Activated CD4-positive, alpha-beta memory T cell treated with anti-CD3 and anti-CD28 coated beads for 36 hours (primary cell): ENCODE measurements at regions of chr6 and their contacts with region 1.

Region 1: DNA sequence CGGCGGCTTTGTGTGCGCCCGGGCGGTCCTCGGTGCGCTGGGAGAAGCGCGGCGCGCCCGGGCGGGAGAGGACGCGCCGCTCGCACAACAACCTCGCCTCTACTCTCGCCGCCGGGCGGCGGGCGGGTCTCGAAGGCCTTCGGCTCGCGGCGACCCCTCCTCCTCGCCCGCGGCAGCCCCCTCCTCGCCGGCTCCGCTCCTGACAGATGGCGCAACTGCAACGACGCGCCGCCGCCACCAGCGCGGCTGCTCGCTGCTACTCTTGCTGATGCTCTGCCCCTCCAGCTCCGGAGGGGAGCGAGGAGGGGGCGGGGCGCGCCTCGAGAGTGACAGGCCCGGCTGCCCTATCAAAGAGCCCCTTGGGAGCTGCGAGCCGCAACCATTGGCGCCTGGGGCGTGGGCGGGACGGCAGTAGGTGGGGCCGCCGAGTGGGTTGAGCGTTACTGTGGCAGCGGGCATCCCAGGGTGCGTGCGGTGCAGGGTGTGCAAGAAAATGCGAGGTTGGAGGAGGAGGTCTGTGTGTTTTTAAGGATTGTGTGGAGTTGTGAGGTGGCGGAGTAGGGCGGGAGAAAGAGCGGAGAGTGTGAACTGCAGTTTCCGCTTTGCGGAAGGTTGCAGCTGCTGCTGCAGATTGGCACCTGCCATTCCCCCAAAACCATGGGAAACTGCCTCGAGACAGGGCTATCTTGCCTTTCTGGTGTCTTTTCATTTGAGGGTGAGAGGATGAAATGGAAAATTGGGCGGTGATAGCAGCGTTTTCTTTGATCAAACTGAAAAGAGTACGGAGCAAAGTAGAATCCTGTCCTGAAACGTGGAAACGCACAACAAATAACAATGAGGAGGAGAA is at the start of gene FYN:
- DNase-seq: peak; percentile 99
- H3K4me3 Mint-ChIP-seq: peak within 1 kb of the TSS; percentile 98
- H3K27ac Mint-ChIP-seq: peak within 1 kb of the TSS; percentile 96
- H3K4me1 Mint-ChIP-seq: peaks cover 30% of the 10 kb centered on the region
- H3K27me3 Mint-ChIP-seq: no peaks in the 10 kb centered on the region
- total RNA-seq, gene FYN: 353 to 365 TPM

Region 2: DNA sequence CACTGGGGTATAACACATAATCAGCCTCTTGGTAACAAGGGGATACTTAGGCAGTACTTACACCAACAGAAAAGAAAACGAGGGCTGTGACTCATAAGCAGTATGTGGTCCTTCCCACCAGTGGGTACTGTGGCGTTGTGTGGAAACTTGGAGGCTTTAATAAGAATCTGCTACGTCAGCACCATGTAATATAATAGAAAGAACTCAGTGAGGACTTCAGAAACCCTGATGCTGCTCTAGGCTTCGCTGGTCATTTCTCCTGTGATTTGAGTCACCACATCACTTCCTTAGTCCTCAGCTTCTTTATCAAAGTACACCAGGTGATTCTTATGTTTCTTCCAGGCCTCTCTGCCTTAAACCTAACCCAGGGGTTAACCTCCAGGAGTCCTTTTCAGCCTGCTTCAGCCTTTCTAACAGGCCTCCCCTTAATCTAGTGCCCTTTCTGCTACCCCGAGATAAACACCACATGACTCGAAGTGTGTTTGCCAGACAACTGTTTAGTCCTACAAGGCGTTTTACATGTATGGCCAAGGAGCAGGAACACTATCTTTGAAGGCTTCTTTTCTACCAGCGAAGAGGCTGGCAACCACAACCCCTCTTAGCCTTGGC is 68.7 kb before region 1 on chr6:
- CTCF ChIA-PET with region 1: interaction called, 4 read pairs
- POLR2A ChIA-PET with region 1: interaction called, 8 read pairs
- intact Hi-C with region 1: loop called (anchors 2 kb)
- DNase-seq: peak; percentile 86
- H3K4me3 Mint-ChIP-seq: peak overlapping the region; percentile 59
- H3K27ac Mint-ChIP-seq: peak overlapping the region; percentile 91
- H3K4me1 Mint-ChIP-seq: peaks cover 94% of the 10 kb centered on the region
- H3K27me3 Mint-ChIP-seq: no peaks in the 10 kb centered on the region

Region 3: DNA sequence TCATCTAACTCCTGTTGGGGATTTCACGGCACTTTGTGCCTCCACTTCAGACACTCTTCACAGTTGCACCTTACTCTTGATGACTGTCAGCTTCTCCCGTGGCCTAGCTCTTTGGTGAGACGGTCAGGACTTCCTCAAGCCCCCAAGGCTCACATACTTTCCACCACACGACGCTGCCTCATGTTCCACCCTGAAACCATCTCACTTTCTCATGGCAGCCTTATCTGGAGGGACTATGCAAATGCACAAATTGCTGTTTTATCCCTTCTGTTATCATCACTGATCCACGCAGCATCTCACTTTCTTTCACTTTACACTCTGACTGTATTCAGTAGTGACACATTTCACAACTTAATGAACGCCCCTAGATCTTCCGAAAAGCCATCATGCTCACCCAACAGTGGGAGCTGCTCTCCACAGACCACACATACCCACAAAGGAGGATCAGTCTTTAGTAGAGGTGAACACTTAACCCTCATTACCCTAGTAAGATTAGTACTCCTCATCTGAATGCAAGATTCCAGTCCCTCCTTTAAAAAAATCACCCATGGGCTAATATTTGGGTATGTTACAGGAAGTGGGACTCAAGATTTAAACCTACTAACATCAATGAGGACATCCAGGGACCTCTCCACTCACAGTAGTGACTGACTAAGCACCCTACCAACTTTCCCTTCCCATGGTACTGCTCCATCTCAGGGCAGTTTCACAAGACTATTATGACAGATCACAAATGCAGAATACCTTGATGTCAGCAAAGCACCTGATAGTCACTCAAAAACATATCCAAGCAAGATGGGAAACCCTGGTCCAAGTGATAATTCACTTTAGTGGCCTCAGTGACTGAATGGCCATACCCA is 35.5 kb before region 1 on chr6:
- CTCF ChIA-PET with region 1: interaction called, 11 read pairs
- POLR2A ChIA-PET with region 1: interaction called, 9 read pairs
- intact Hi-C with region 1: loop called (anchors 1 kb)
- DNase-seq: peak; percentile 77
- H3K4me3 Mint-ChIP-seq: peak overlapping the region; percentile 54
- H3K27ac Mint-ChIP-seq: peak overlapping the region; percentile 91
- H3K4me1 Mint-ChIP-seq: peaks cover 37% of the 10 kb centered on the region
- H3K27me3 Mint-ChIP-seq: no peaks in the 10 kb centered on the region

Region 4: DNA sequence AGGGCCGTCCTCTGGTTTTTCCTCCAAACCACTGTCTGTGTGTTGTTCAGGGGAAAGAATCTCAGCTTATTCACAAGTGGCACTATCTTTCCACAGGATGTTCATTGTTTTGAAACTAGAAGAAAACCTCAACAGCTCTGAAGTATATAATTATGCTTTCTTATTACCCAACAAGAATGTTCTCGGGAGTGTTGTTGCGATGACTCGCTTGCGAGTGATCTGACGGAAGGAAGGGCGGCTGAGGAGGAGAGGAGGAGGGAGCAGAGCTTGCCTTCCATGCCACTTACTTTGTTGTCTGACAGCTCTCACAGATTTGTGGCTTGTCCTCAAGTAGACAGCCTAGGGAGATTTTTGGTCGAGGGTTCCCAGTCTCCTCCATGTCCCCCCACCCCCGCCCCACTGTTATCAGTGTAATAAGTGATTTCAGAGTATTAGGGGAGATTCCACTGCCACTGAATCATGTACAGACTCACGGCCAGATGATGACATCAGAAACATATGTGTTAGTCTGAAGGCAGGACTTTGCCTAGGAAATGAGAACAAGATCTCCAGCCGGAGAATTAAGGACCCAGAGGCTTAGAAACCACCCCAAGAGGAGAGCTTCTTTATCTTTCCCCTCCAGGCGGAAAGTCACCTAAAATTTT is 99.8 kb after region 1 on chr6:
- CTCF ChIA-PET with region 1: interaction called, 4 read pairs
- POLR2A ChIA-PET with region 1: interaction called, 15 read pairs
- intact Hi-C with region 1: loop called (anchors 1 kb)
- DNase-seq: peak; percentile 81
- H3K4me3 Mint-ChIP-seq: peak overlapping the region; percentile 59
- H3K27ac Mint-ChIP-seq: peak overlapping the region; percentile 89
- H3K4me1 Mint-ChIP-seq: peaks cover 63% of the 10 kb centered on the region
- H3K27me3 Mint-ChIP-seq: no peaks in the 10 kb centered on the region

Region 5: GRCh38 chr6:111997078-111997852 is 123.9 kb after region 1 on chr6:
- CTCF ChIA-PET with region 1: interaction called, 14 read pairs
- POLR2A ChIA-PET with region 1: interaction called, 6 read pairs
- intact Hi-C with region 1: loop called (anchors 1 kb)
- DNase-seq: peak; percentile 87
- H3K4me3 Mint-ChIP-seq: peak overlapping the region; percentile 48
- H3K27ac Mint-ChIP-seq: peak overlapping the region; percentile 28
- H3K4me1 Mint-ChIP-seq: peaks cover 48% of the 10 kb centered on the region
- H3K27me3 Mint-ChIP-seq: no peaks in the 10 kb centered on the region

Region 6: GRCh38 chr6:112128208-112128607 is 254.8 kb after region 1 on chr6:
- CTCF ChIA-PET with region 1: no interaction called
- POLR2A ChIA-PET with region 1: no interaction called
- intact Hi-C with region 1: no loop called
- DNase-seq: no peak
- H3K4me3 Mint-ChIP-seq: no peak overlapping the region
- H3K27ac Mint-ChIP-seq: no peak overlapping the region
- H3K4me1 Mint-ChIP-seq: no peaks in the 10 kb centered on the region
- H3K27me3 Mint-ChIP-seq: peaks cover 14% of the 10 kb centered on the region